Adrenal gland (tissue), 19 donors: ENCODE measurements at regions of chr6 and their contacts with region 1.

Region 1: GRCh38 chr6:24428628-24429027 is 25.9 kb downstream of the MRS2 start:
- DNase-seq: no peak
- H3K4me3 ChIP-seq: no peak overlapping the region
- H3K27ac ChIP-seq: no peak overlapping the region
- H3K4me1 ChIP-seq: no peaks in the 10 kb centered on the region
- H3K27me3 ChIP-seq: no peaks in the 10 kb centered on the region
- CTCF ChIP-seq: no peak
- POLR2A ChIP-seq: no peak

Region 2: DNA sequence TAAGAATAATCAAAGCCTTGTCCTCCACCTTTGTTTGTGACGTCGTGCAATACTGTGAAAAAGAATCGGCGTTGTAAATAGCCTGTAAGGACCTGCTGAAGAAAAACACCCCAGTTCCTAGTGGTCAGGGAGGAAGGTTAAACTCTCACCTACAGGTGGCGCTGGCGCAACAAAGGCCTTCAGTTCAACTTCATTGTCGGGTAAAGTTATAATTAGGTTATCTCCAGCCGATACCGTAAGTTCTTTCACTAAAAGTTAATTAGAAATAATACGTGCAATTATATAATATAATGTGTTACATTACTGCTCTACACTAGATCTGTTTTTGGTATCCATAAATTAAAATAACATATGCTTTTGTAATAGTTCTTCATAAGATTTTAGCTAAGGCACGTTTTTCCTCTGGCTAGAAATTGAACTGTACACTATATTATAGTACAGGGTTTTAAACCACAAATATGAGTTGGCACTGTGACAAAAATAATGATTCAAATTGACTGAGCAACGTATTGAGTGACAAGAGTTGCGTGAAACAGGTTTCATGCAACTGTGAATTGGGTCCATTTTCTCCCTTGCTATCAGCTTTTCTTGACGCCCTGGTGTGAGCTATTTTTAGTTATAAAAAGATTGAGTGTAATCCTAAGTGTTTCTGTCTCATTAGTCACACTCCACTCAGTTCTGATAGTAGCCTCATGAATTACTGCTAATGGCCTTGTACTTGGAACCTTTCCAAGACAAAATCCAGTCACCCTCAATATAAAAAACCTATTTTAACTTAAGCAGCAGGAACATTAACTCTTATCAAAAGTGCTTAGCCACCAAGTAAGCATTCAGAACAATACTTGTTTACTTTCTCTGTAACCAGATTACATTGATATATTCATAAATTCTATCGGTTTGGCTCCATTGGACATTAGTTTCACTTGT is 155.1 kb after region 1 on chr6:
- intact Hi-C with region 1: no loop called
- DNase-seq: peak; percentile 53 to 90 (median 69)
- H3K4me3 ChIP-seq: peak overlapping the region in 1 of 4 donors; percentile 1
- H3K27ac ChIP-seq: no peak overlapping the region
- H3K4me1 ChIP-seq: peaks cover 0 to 12% of the 10 kb centered on the region in 2 donors
- H3K27me3 ChIP-seq: peaks cover 8% of the 10 kb centered on the region
- CTCF ChIP-seq: peak; percentile 45 to 87 (median 62)
- POLR2A ChIP-seq: no peak

Region 3: GRCh38 chr6:24689964-24690363 is 261.3 kb after region 1 on chr6:
- intact Hi-C with region 1: loop called in 1 of 2 experiments (anchors 10 kb)
- DNase-seq: no peak
- H3K4me3 ChIP-seq: no peak overlapping the region
- H3K27ac ChIP-seq: no peak overlapping the region
- H3K4me1 ChIP-seq: peaks cover 0 to 5% of the 10 kb centered on the region in 2 donors
- H3K27me3 ChIP-seq: no peaks in the 10 kb centered on the region
- CTCF ChIP-seq: no peak
- POLR2A ChIP-seq: no peak